ENCODE measurements at regions of chr19 and their contacts with region 1.

Region 1: GRCh38 chr19:23686621-23687423 is at the start of gene ZNF675:
- DNase-seq: peak; percentile 92
- ATAC-seq: peak; percentile 96
- H3K4me3 Mint-ChIP-seq: peak within 1 kb of the TSS; percentile 98
- H3K27ac Mint-ChIP-seq: peak within 1 kb of the TSS; percentile 100
- H3K4me1 Mint-ChIP-seq: peaks cover 32% of the 10 kb centered on the region
- H3K27me3 Mint-ChIP-seq: no peaks in the 10 kb centered on the region
- CTCF ChIP-seq: no peak
- total RNA-seq, gene ZNF675: 28.9 to 34.3 TPM (median 29.7 TPM) in 3 replicates

Region 2: DNA sequence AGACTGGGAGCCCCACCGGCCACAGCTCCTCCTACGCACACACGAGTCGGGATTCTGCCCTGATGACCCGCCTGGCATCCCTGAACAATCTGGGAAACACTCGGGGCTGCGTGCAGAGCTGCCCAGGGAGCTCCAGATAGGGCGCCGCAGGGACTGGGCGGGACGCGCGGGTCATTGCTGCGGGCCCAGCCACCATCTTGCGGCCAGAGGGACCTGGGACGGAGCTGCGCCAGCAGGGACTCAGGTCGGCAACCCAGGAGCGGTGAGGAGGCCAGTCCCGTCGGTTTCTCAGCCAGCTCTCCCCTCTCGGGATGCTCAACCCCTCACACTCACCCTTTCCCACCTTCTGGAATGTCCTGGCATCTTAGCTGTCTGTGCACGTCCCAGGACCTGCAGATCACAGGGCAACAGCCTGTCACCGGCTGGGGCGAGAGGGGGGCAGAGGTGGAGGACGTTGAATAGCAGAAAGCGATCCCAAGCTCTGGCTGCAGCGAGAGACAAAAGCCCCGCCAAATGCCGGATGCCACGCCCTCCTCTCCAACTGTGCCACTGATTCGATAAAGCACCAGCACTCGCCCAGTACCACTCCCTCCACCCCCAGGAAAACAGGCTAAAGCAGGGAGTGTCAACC is 271.1 kb before region 1 on chr19:
- CTCF ChIA-PET with region 1: no interaction called
- POLR2A ChIA-PET with region 1: interaction called, 10 read pairs
- DNase-seq: peak; percentile 90
- ATAC-seq: peak; percentile 94
- H3K4me3 Mint-ChIP-seq: peak overlapping the region; percentile 92
- H3K27ac Mint-ChIP-seq: peak overlapping the region; percentile 90
- H3K4me1 Mint-ChIP-seq: peaks cover 21% of the 10 kb centered on the region
- H3K27me3 Mint-ChIP-seq: peaks cover 7% of the 10 kb centered on the region; the same call in 1 of the 2 replicates
- CTCF ChIP-seq: no peak

Region 3: GRCh38 chr19:23558541-23558940 is 128.3 kb before region 1 on chr19:
- CTCF ChIA-PET with region 1: no interaction called
- POLR2A ChIA-PET with region 1: no interaction called
- DNase-seq: no peak
- ATAC-seq: no peak
- H3K4me3 Mint-ChIP-seq: no peak overlapping the region
- H3K27ac Mint-ChIP-seq: no peak overlapping the region
- H3K4me1 Mint-ChIP-seq: no peaks in the 10 kb centered on the region
- H3K27me3 Mint-ChIP-seq: peaks cover 8% of the 10 kb centered on the region; the same call in 1 of the 2 replicates
- CTCF ChIP-seq: no peak

Region 4: GRCh38 chr19:23758187-23759074 is 71.6 kb after region 1 on chr19 and contains the start of gene ZNF681:
- CTCF ChIA-PET with region 1: interaction called, 3 read pairs
- POLR2A ChIA-PET with region 1: interaction called, 18 read pairs
- DNase-seq: peak; percentile 87
- ATAC-seq: peak; percentile 81
- H3K4me3 Mint-ChIP-seq: peak within 1 kb of the TSS; percentile 95
- H3K27ac Mint-ChIP-seq: peak within 1 kb of the TSS; percentile 91
- H3K4me1 Mint-ChIP-seq: peaks cover 6% of the 10 kb centered on the region; the same call in 1 of the 2 replicates
- H3K27me3 Mint-ChIP-seq: peaks cover 21% of the 10 kb centered on the region
- CTCF ChIP-seq: no peak
- total RNA-seq, gene ZNF681: 12.9 to 16.9 TPM (median 14.5 TPM) in 3 replicates

Measured in WTC11 (cell line).